Uterus (tissue), 4 donors: ENCODE measurements at regions of chr5 and their contacts with region 1.

Region 1: DNA sequence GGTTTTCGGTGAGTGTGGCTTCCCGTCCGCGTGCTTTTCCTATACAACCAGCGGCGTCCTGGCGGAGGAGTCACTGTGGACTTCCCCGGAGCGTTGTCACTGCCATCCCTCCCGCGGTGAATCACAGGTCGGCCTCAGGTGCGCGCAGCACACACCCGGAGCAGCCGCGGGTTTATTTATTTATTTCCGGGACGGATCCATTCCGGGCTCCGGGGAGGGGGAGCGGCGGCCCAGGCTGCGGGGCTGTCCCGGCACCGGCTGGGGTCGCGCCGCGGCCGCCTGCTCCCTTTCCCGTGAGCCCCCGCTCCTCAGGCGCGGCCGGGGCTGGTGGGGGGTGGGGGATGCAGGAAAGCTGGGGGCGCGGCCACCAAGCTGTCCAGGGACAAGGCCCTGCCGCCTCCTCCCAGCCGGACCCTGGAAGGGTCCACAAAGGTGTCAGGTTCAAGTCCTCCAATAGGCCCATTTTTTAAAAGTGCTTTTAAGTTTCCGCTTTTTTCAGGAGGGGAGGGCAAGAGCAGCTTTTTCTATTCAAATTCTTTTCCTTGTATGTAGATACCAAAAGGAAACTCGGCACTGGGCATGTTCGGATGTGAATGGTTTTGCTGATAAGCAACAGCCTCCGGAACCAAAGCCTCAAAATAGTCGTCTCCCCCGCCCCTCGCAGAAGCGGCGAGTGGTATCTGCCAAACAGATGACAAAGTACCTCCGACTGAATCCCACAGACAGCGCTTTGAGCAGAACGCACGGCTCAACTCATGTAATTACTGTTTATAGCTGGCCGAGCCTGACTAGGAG is 192.5 kb downstream of the CD180 start:
- DNase-seq: peak; percentile 84 to 94
- H3K4me3 ChIP-seq: peak overlapping the region; percentile 56 to 58
- H3K27ac ChIP-seq: peak overlapping the region; percentile 93 to 94
- H3K4me1 ChIP-seq: no peaks in the 10 kb centered on the region
- H3K27me3 ChIP-seq: no peaks in the 10 kb centered on the region
- CTCF ChIP-seq: no peak
- POLR2A ChIP-seq: peak; percentile 55

Region 2: DNA sequence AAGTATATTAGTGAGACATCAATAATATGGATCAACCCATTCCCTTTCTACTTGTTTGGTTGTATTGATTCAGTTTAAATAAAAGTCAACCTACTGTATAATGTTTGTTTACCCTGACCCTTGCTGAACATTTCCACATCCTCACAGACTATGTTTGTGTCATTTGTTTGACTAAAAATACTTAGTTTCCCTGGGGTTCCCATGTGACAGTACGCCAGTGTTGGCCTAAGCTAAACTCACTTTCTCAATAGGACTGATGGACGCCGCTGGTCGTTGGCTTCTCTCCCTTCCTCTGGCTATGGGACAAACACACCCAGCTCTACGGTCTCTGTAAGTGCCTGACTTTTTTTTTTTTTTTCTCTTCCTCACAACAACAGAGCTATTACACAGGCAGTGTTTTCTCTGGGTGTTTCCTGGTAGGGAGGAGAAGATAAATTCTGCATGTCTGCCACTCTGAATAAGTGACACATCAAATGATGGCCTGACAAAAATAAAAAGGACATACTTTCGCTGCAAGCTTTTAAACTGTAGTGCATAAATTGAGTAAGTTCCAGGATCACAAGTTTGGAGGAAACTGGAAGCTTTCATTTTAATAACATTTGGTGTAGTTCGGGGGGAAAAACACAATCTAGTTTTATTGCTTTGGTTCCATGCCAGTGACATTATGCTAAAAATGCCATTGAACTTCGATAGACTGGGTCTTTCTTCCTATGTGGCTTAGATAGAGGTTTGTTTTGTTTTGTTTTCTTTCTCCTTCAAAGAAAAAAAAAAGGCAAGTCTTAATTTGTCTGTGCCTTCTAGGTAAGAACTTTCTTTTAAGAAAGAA is 91.4 kb after region 1 on chr5:
- intact Hi-C with region 1: loop called (anchors 10 kb)
- DNase-seq: peak; percentile 75 to 81
- H3K4me3 ChIP-seq: peak overlapping the region; percentile 12
- H3K27ac ChIP-seq: peak overlapping the region; percentile 74 to 90
- H3K4me1 ChIP-seq: peaks cover 7 to 18% of the 10 kb centered on the region in 2 donors
- H3K27me3 ChIP-seq: no peaks in the 10 kb centered on the region
- CTCF ChIP-seq: no peak
- POLR2A ChIP-seq: no peak